WTC11 (cell line): ENCODE measurements at regions of chr14 and their contacts with region 1.

Region 1: DNA sequence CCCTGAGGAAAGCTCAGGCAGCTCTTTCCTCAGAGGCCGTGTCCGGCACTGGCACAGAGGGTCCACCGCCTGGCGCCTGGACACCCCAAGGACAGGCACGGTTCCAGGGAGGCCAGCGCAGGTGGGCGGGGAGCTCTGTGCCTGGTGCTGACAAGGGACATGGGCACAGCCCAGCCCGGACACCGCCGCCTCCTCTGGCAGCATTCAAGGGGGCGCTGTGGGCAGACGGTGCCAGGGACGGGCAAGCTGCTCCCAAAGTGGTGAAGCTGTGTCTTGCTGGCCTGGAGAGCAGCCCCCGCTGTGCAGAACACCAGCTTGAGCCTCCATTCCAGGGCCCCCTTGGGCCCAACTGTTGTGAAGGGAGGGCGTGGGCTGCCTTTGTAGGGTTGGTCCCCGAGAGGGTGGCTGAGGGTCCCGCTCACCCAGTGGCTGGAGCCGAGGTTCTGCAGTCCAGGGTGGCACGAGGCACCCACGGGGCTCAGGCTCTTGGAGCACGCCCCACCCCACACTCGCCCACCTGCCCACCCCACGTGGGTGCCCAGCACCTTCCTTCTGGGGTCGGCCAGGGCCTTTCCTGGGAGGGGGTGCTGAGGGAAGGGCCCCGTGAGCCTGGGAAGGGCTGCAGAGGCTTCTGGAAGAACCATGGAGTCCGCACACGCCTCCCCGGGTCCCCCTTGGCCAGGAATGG is 29.2 kb upstream of the TEX22 start:
- DNase-seq: no peak
- ATAC-seq: no peak
- H3K4me3 Mint-ChIP-seq: no peak overlapping the region
- H3K27ac Mint-ChIP-seq: no peak overlapping the region
- H3K4me1 Mint-ChIP-seq: no peaks in the 10 kb centered on the region
- H3K27me3 Mint-ChIP-seq: peaks cover 6% of the 10 kb centered on the region
- CTCF ChIP-seq: no peak

Region 2: DNA sequence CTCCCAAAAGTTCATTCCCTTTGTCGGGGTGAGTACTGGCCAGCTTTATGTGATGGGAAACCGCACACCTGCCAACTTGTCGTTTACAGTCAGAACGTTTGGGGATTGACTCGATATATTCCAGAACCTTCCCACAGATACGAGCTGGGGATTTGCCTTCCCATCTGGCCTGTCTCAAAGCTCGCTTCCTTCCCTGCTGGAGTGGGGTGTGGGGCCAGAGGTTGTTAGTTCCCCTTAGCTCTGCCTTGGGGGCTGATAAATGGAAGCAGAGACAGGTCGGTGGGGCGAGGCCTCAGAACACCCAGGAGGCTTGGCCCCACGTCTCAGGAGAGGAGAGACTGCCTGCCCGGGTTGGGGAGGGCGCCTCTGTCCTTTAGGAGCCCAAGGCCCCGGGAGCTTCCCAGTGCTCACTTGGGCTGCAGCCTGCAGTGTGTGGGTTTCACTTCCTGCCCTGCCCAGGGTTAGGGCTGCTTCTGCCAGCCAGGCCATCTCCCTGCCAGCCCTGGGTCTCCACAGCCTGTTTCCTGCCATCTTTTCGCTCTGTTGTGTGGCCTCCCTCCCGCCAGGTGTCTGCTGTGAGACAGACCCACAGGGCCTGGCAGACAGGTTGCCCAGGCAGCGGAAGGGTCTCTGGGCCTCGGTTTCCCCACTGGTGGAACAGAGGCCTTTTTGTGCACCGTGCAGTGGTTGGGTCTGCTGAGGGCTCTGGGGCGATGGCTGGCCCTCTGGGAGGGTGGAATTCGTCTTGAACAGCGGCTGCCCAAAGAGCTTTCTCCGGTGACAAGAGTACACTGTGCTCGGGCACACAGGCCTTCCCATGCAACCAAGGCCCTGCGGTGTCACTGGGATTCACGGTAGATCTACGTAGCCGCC is 21.1 kb after region 1 on chr14:
- CTCF ChIA-PET with region 1: interaction called, 18 read pairs
- POLR2A ChIA-PET with region 1: no interaction called
- DNase-seq: no peak
- ATAC-seq: no peak
- H3K4me3 Mint-ChIP-seq: no peak overlapping the region
- H3K27ac Mint-ChIP-seq: no peak overlapping the region
- H3K4me1 Mint-ChIP-seq: no peaks in the 10 kb centered on the region
- H3K27me3 Mint-ChIP-seq: no peaks in the 10 kb centered on the region
- CTCF ChIP-seq: no peak

Region 3: GRCh38 chr14:105536681-105537368 is 167.7 kb after region 1 on chr14:
- CTCF ChIA-PET with region 1: no interaction called
- POLR2A ChIA-PET with region 1: no interaction called
- DNase-seq: no peak
- ATAC-seq: no peak
- H3K4me3 Mint-ChIP-seq: no peak overlapping the region
- H3K27ac Mint-ChIP-seq: no peak overlapping the region
- H3K4me1 Mint-ChIP-seq: no peaks in the 10 kb centered on the region
- H3K27me3 Mint-ChIP-seq: peaks cover 20% of the 10 kb centered on the region
- CTCF ChIP-seq: no peak